ENCODE measurements at regions of chr2 and their contacts with region 1.

Region 1: DNA sequence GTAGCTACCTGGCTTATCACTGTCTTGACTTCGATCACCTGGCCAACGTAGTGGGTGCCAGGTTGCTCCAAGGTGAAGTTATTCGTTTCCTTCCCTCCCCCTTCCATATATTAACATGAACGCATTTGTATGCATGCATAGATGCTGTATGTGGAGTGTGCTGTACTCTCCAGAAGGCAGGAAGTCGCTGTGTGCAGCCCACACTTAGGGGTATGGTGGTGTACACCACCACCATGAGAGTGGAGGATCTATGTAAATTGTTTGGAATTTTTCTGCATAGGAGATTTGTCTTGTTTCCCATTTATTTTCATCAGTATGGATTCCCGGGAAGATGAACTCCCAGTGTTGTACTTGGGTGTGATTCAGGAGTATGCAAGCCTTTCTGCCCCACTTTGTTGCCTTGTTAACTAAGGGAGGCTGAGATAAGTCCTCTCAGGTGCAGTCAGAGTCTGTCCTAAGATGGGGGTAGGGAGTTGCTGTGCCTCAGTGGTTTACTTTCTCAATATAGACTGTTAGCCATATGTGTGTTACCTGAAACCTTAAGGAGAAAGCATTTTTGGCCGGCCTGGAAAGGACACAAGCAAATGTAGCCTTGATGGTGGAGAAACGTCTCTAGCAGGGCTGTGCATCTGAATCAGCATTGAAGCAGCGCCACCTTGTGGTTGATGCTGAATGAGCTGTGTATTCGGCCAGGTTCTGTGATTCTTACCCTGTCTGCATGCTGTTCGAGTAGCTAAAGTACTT is 149.8 kb downstream of the TANC1 start:
- DNase-seq: peak; percentile 86 to 90 (median 87)
- ATAC-seq: peak; percentile 80 to 86 (median 84)
- H3K4me3 ChIP-seq: no peak overlapping the region
- H3K27ac ChIP-seq: peak overlapping the region in 11 of 12 donors; percentile 43 to 94 (median 70)
- H3K4me1 ChIP-seq: peaks cover 3 to 67% (median 18%) of the 10 kb centered on the region in 12 donors
- H3K27me3 ChIP-seq: no peaks in the 10 kb centered on the region
- CTCF ChIP-seq: peak; percentile 84 to 96 (median 91)
- POLR2A ChIP-seq: no peak

Region 2: GRCh38 chr2:158968396-158969161 is 149.7 kb before region 1 on chr2 and contains the start of gene TANC1:
- intact Hi-C with region 1: loop called (anchors 2 to 10 kb)
- DNase-seq: peak; percentile 95 to 97 (median 96)
- ATAC-seq: peak; percentile 88 to 97 (median 94)
- H3K4me3 ChIP-seq: peak within 1 kb of the TSS; percentile 64 to 93 (median 86)
- H3K27ac ChIP-seq: peak within 1 kb of the TSS; percentile 90 to 97 (median 94)
- H3K4me1 ChIP-seq: peaks cover 0 to 64% (median 37%) of the 10 kb centered on the region in 12 donors
- H3K27me3 ChIP-seq: peaks cover 0 to 12% (median 0%) of the 10 kb centered on the region in 9 donors
- CTCF ChIP-seq: no peak
- POLR2A ChIP-seq: peak; percentile 57 to 98
- total RNA-seq, gene TANC1: 41.2 to 91.1 (median 74.0) TPM

Region 3: GRCh38 chr2:159030674-159031380 is 87.5 kb before region 1 on chr2:
- intact Hi-C with region 1: loop called in 6 of 10 experiments (anchors 5 kb)
- DNase-seq: peak; percentile 63 to 80 (median 71)
- ATAC-seq: peak; percentile 59 to 89 (median 85)
- H3K4me3 ChIP-seq: no peak overlapping the region
- H3K27ac ChIP-seq: peak overlapping the region; percentile 67 to 92 (median 82)
- H3K4me1 ChIP-seq: peaks cover 9 to 78% (median 54%) of the 10 kb centered on the region in 12 donors
- H3K27me3 ChIP-seq: no peaks in the 10 kb centered on the region
- CTCF ChIP-seq: no peak
- POLR2A ChIP-seq: no peak

Region 4: DNA sequence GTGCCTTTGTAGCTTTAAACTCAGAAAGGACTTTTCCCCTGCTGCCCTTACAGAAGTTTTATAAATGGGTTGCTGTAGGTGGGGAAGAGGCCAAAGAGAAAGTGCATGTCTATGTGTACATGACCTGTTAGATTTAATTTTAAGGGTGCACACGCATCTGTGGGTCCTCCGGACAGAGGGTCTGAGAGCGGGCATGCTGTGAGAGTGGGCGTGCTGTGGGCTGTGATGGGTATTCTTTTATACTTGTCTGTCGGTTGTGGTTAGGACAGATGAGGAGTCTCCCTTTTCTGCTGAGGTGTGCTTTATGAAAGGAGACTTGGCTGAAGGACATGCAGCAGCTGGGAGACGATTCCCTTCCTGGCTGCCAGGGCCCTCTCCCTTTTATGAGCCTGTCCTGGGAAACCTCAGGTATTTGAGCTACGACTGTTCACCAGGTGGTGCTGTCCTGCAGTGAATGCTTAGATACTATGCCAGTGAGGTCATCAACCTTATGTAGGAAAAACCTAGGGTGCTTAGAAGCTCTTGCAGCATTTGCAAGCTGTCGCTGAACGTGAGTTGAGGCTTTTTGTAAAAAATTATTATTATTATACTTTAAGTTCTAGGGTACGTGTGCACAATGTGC is 82.4 kb before region 1 on chr2:
- intact Hi-C with region 1: loop called in 7 of 10 experiments (anchors 5 kb)
- DNase-seq: no peak
- ATAC-seq: peak; percentile 39 to 77 (median 72)
- H3K4me3 ChIP-seq: no peak overlapping the region
- H3K27ac ChIP-seq: peak overlapping the region in 9 of 12 donors; percentile 13 to 58 (median 41)
- H3K4me1 ChIP-seq: peaks cover 0 to 51% (median 38%) of the 10 kb centered on the region in 12 donors
- H3K27me3 ChIP-seq: no peaks in the 10 kb centered on the region
- CTCF ChIP-seq: peak in 9 of 12 donors; percentile 10 to 55 (median 33)
- POLR2A ChIP-seq: no peak

Region 5: GRCh38 chr2:159044804-159045286 is 73.4 kb before region 1 on chr2:
- intact Hi-C with region 1: loop called in 1 of 10 experiments (anchors 5 kb)
- DNase-seq: peak in 1 of 5 donors; percentile 57
- ATAC-seq: peak; percentile 32 to 52 (median 43)
- H3K4me3 ChIP-seq: no peak overlapping the region
- H3K27ac ChIP-seq: peak overlapping the region in 10 of 12 donors; percentile 9 to 73 (median 46)
- H3K4me1 ChIP-seq: peaks cover 0 to 69% (median 42%) of the 10 kb centered on the region in 12 donors
- H3K27me3 ChIP-seq: no peaks in the 10 kb centered on the region
- CTCF ChIP-seq: no peak
- POLR2A ChIP-seq: no peak

Region 6: GRCh38 chr2:159064446-159065301 is 53.6 kb before region 1 on chr2:
- intact Hi-C with region 1: no loop called
- DNase-seq: no peak
- ATAC-seq: peak in 3 of 4 donors; percentile 10 to 25 (median 14)
- H3K4me3 ChIP-seq: no peak overlapping the region
- H3K27ac ChIP-seq: peak overlapping the region in 11 of 12 donors; percentile 8 to 72 (median 52)
- H3K4me1 ChIP-seq: peaks cover 0 to 67% (median 37%) of the 10 kb centered on the region in 12 donors
- H3K27me3 ChIP-seq: no peaks in the 10 kb centered on the region
- CTCF ChIP-seq: no peak
- POLR2A ChIP-seq: no peak

Region 7: GRCh38 chr2:159226059-159226461 is 107.8 kb after region 1 on chr2:
- intact Hi-C with region 1: no loop called
- DNase-seq: no peak
- ATAC-seq: peak in 3 of 4 donors; percentile 8 to 67 (median 41)
- H3K4me3 ChIP-seq: no peak overlapping the region
- H3K27ac ChIP-seq: peak overlapping the region; percentile 42 to 87 (median 73)
- H3K4me1 ChIP-seq: peaks cover 5 to 59% (median 20%) of the 10 kb centered on the region in 12 donors
- H3K27me3 ChIP-seq: no peaks in the 10 kb centered on the region
- CTCF ChIP-seq: no peak
- POLR2A ChIP-seq: no peak

Measured in heart left ventricle (tissue), 16 donors.